GM12878 (cell line): ENCODE measurements at regions of chr9 and their contacts with region 1.

Region 1: DNA sequence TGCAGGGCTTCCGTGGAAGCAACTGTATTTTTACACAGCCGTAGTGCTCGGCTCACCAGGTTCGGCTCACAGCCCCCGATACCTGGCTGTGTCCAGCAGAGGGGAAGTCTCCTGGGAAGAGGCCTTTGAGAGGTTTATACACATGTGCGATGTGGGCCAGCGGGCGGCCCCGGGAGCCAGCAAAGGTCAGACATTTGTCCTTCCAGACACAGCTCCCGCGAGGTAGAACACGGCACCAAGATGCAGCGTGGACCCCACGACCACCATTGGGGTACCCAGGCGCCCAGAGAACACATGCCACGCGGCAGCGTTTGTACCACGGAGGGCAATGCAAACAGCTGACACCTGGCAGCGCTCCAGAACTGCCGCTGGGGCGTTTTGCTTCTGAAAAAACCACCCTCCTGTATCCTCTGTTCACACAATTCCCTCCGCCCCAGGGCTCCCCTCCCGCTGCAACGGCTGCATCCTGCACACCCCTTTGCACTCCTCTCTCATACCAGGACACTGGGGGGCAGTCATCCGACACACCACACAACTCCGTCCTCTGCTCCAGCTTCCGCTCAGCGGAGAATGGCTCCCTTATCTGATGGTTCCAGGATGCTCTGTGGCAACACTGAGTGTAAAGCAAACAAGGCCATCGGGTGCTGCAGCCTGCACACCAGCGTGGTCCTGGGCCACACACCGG is 235.3 kb downstream of the SYK start:
- DNase-seq: no peak
- ATAC-seq: peak; percentile 73
- H3K4me3 ChIP-seq: no peak overlapping the region
- H3K27ac ChIP-seq: no peak overlapping the region
- H3K4me1 ChIP-seq: peaks cover 30% of the 10 kb centered on the region
- H3K27me3 ChIP-seq: no peaks in the 10 kb centered on the region; a peak in 2 of 4 replicates
- CTCF ChIP-seq: peak in 2 of 3 experiments; percentile 25 to 41; a peak in 3 of 6 replicates
- EP300 ChIP-seq: no peak
- POLR2A ChIP-seq: no peak
- RAD21 ChIP-seq: peak; percentile 61

Region 2: DNA sequence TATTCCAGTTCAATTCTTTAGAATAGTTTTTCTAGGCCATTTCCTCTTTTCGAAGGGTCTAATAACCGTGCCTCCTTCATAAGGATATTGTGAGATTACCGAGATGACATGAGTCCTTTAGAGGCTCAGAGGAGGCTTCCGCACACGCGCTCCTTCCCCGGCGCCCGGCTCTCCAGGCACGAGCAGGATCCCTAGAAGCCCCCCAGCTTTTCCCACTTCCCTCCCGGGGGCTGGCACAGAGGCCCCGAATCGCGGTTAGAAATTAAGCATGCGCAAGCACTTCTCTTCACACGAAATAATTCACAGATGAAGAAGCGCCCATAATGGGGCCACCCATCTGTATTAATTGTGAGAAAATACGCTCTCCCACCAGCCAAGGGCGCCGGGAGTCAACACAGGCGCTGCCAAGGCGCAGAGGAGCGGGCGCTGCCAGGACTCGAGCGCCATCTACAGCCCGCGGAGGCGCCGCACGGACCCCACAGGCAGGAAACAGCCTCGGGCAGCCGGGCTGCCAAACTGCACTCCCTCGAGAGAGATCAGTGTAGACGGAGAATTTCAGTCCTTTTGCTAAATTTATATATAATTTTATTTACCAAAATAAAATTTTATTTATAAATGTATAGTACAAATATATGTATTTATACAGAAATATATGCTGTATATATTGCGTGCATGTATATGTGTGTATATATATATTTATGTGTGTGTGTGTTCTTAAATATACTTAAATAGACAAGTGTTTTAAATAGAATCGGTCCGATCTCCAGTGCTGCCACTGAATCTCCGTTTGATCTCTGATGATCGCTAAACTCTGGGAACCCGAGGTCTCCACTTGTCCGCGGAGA is 644.7 kb after region 1 on chr9:
- CTCF ChIA-PET with region 1: interaction called, 5 read pairs
- POLR2A ChIA-PET with region 1: no interaction called
- RAD21 ChIA-PET with region 1: no interaction called
- SMC1A ChIA-PET with region 1: no interaction called
- in situ Hi-C with region 1: no loop called
- intact Hi-C with region 1: loop called (anchors 10 kb)
- DNase-seq: no peak
- ATAC-seq: peak; percentile 98
- H3K4me3 ChIP-seq: no peak overlapping the region
- H3K27ac ChIP-seq: no peak overlapping the region
- H3K4me1 ChIP-seq: peaks cover 5% of the 10 kb centered on the region; the same call in 1 of the 2 replicates
- H3K27me3 ChIP-seq: no peaks in the 10 kb centered on the region
- CTCF ChIP-seq: peak; percentile 78 to 88 (median 79)
- EP300 ChIP-seq: no peak
- POLR2A ChIP-seq: no peak
- RAD21 ChIP-seq: peak; percentile 66